Dorsolateral prefrontal cortex (tissue), 120 donors: ENCODE measurements at regions of chr1 and their contacts with region 1.

Region 1: GRCh38 chr1:66271216-66271903 is 262.6 kb upstream of the SGIP1 start:
- DNase-seq: peak in 5 of 10 donors; percentile 35 to 75 (median 51)
- H3K4me3 ChIP-seq: peak overlapping the region in 33 of 59 donors; percentile 2 to 41 (median 16)
- H3K27ac ChIP-seq: peak overlapping the region; percentile 40 to 97 (median 89)
- H3K27me3 ChIP-seq: no peaks in the 10 kb centered on the region
- CTCF ChIP-seq: no peak

Region 2: DNA sequence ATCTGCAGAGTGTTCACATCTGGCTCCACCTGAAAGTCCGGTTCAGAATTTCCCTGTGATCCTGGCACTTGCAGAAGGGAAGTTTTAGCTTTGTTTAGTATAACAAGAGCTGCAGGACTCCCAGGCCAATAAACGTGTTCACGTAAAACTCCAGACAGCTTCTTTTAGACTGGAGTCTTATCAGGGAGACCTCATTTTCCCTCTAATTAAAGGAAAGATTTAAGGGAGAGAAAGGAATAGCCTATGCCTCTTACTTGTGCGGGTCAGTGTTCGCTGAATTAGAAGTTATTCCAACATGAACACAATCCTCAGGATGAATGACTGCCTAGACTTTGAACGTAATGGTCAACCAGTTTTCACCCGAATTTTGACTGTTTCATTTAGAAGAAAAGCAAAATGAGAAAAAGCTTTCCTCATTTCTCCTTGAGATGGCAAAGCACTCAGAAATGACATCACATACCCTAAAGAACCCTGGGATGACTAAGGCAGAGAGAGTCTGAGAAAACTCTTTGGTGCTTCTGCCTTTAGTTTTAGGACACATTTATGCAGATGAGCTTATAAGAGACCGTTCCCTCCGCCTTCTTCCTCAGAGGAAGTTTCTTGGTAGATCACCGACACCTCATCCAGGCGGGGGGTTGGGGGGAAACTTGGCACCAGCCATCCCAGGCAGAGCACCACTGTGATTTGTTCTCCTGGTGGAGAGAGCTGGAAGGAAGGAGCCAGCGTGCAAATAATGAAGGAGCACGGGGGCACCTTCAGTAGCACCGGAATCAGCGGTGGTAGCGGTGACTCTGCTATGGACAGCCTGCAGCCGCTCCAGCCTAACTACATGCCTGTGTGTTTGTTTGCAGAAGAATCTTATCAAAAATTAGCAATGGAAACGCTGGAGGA is 60.5 kb after region 1 on chr1:
- intact Hi-C with region 1: loop called in 1 of 2 experiments (anchors 5 kb)
- DNase-seq: peak in 4 of 10 donors; percentile 26 to 54 (median 40)
- H3K4me3 ChIP-seq: peak overlapping the region; percentile 10 to 73 (median 56)
- H3K27ac ChIP-seq: peak overlapping the region; percentile 3 to 93 (median 83)
- H3K27me3 ChIP-seq: no peaks in the 10 kb centered on the region
- CTCF ChIP-seq: peak in 4 of 56 donors; percentile 12 to 25 (median 20)

Region 3: DNA sequence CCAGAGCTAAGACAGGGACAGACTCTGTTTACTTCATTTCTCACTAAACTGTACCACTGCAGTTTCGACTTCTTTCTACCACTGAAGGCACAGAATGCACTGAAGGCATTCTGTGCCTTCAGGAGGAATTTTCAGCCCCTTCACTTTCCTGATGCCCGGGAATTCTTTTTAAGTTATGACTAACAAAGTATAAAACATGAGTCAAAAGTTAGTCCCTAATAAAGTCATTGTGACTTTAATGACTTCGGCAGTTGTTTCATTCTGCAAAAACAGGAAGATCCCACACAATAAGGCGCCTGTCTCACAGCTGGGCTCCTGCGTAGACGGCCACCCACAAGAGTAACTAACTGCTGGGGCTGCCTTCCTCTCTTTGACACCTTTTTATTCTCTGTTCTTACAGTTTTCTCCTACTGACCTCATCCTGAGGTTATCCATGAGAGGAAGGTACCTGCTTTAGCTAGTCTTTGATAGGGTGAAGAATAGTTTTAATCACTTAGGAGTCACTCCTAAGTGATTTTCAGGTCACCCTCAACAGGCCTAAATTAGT is 78.7 kb after region 1 on chr1:
- intact Hi-C with region 1: loop called in 1 of 2 experiments (anchors 5 kb)
- DNase-seq: peak in 1 of 10 donors; percentile 53
- H3K4me3 ChIP-seq: peak overlapping the region in 37 of 59 donors; percentile 2 to 45 (median 13)
- H3K27ac ChIP-seq: peak overlapping the region; percentile 39 to 94 (median 83)
- H3K27me3 ChIP-seq: no peaks in the 10 kb centered on the region
- CTCF ChIP-seq: peak in 1 of 56 donors; percentile 13

Region 4: DNA sequence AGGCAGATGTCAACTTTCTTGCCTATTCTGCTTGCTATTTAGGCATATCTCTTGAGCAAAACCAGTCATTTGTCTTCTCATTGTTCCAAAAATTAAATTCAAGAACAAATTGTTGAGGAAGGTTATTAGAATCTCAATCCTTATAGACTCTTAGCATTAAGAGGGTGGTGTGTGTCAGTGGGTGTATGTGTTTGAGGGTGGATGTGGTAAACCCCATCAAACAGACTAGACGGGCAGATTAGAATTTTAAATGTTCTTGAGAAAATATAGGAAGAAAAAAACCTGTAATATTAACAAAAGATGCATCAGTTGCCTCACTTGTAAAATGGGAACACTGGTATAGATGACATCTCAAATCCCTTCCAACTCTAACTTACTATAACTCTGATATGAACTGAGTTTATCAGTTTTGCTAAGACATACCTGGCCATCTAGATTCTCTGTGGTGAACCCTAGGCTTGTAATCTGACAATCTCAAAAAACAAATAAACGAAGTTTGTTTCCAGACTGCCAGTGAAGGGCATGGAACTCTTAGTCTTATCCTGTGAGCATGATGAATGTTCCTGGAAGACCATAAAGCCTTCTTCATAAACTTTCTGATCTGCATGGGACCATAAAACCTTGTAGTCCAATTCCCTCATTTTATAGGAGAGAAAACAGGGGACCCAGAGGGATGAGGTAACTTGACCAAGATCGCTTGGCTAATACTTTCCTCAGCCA is 86.3 kb after region 1 on chr1:
- intact Hi-C with region 1: loop called (anchors 2 to 5 kb)
- DNase-seq: no peak
- H3K4me3 ChIP-seq: peak overlapping the region in 24 of 59 donors; percentile 1 to 59 (median 44)
- H3K27ac ChIP-seq: peak overlapping the region in 40 of 59 donors; percentile 2 to 89 (median 77)
- H3K27me3 ChIP-seq: no peaks in the 10 kb centered on the region
- CTCF ChIP-seq: no peak